Activated CD8-positive, alpha-beta T cell treated with anti-CD3 and anti-CD28 coated beads for 36 hours (primary cell): ENCODE measurements at regions of chr15 and their contacts with region 1.

Region 1: GRCh38 chr15:75367913-75368688 is at the start of gene MAN2C1:
- DNase-seq: peak; percentile 96
- ATAC-seq: peak; percentile 95
- H3K4me3 Mint-ChIP-seq: peak within 1 kb of the TSS; percentile 92
- H3K27ac Mint-ChIP-seq: peak within 1 kb of the TSS; percentile 94
- H3K4me1 Mint-ChIP-seq: peaks cover 23% of the 10 kb centered on the region
- H3K27me3 Mint-ChIP-seq: no peaks in the 10 kb centered on the region
- CTCF ChIP-seq: no peak
- total RNA-seq, gene MAN2C1: 170 to 181 TPM

Region 2: DNA sequence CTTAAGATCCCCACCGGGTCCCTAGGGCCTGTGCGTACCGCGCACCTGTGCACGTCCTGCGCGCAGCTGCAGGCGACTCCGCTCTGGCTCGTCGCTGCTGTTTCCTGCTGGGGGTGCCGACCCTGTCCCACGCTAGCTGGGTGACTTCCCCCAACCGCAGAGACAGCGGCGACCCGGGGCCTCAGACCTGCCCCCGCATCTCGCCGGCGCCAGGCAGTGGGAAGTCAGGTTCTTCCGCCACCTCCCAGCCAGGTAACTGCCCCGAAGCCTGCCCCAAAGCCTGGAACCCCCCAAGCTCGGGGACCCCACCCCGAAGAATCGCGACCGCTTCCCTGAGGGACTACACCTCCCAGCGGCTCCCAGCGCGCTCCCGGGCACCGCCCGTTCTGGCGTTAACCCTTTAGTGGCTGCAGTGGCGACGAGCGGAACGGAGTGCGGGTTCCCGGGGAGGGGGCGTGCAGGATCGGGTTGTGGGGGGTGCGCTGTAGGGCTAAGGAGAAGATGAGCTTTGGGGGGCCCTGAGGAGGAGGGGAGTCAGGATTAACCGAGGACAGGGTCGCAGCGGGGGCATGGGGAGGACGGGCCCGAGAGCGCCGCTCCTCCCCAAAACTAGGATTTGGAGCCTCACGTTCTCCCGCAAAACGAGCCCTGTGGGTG is 20.8 kb before region 1 on chr15:
- CTCF ChIA-PET with region 1: interaction called, 31 read pairs
- POLR2A ChIA-PET with region 1: interaction called, 81 read pairs
- intact Hi-C with region 1: no loop called
- DNase-seq: peak; percentile 76
- ATAC-seq: peak; percentile 61
- H3K4me3 Mint-ChIP-seq: peak overlapping the region; percentile 76
- H3K27ac Mint-ChIP-seq: peak overlapping the region; percentile 62
- H3K4me1 Mint-ChIP-seq: peaks cover 28% of the 10 kb centered on the region
- H3K27me3 Mint-ChIP-seq: peaks cover 1% of the 10 kb centered on the region
- CTCF ChIP-seq: no peak

Region 3: DNA sequence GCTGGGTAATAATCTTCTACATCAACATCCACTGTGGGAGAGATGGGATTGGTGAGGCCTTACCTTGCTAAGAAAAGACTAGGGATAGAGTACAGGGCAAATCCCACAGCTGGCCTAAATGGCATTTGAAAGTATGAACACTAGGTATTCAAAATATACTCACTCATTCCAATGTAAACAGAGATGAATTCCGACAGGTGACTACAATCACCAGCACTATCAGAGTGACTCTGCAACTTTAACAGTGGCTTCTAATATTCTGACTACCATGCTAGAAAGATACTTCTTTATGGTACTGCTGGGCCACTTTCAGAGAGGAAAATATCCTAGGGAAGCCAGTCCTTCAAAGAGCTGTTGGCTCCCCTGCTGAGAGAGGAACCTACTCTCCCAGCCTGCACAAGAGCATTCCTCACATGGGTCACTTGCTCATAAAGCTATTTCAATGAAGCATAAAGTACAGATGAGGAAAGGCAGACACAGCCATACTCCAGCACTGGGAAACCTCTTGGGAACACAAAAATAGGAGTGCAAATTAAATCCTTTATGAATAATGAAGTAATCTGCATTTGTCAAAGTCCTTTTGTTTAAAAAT is 21.8 kb after region 1 on chr15:
- CTCF ChIA-PET with region 1: interaction called, 11 read pairs
- POLR2A ChIA-PET with region 1: interaction called, 8 read pairs
- intact Hi-C with region 1: no loop called
- DNase-seq: no peak
- ATAC-seq: no peak
- H3K4me3 Mint-ChIP-seq: no peak overlapping the region
- H3K27ac Mint-ChIP-seq: no peak overlapping the region
- H3K4me1 Mint-ChIP-seq: peaks cover 16% of the 10 kb centered on the region
- H3K27me3 Mint-ChIP-seq: no peaks in the 10 kb centered on the region
- CTCF ChIP-seq: no peak

Region 4: GRCh38 chr15:75416584-75416983 is 48.5 kb after region 1 on chr15:
- CTCF ChIA-PET with region 1: interaction called, 11 read pairs
- POLR2A ChIA-PET with region 1: no interaction called
- intact Hi-C with region 1: no loop called
- DNase-seq: peak; percentile 15
- ATAC-seq: peak; percentile 55
- H3K4me3 Mint-ChIP-seq: no peak overlapping the region
- H3K27ac Mint-ChIP-seq: peak overlapping the region; percentile 79
- H3K4me1 Mint-ChIP-seq: peaks cover 20% of the 10 kb centered on the region
- H3K27me3 Mint-ChIP-seq: no peaks in the 10 kb centered on the region
- CTCF ChIP-seq: no peak

Region 5: DNA sequence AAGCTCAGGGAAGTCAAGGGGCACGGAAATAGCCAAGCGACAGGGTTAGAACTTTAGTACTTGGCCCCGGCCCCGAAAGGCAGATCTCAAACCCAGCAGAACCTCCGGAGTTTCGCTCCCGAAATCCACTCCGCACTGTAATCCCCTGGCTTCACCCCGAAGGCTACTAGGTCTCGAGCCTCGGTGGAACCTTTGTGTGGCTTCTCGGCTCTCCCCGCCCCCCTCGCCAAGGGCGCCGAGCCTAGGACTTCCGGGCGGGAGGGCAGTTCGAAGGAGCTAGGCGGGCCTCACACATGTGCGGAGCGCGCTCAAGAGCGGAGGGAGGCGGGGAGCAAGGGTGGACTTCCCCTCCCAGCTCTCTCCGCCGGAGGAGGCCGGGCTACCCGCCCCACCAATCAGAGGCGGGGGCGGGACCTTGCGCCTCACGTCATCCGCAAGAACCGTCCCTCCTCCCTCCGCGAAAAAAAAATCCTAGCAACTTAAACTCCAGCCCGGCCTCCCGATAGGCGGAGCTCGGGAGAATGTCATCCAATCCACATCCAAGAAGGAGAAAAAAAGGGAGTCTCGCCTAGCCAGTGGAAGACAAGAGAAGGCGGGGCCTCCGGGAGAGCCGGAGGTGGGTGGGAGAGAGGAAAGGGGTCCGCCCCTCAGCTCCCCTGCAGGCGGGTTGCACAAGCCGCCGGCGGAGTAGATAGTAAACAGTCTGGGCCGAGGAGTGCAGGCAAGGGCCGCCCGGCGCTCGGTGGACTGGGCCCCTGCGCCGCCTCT is 85.8 kb after region 1 on chr15:
- CTCF ChIA-PET with region 1: interaction called, 25 read pairs
- POLR2A ChIA-PET with region 1: interaction called, 30 read pairs
- intact Hi-C with region 1: loop called (anchors 5 kb)
- DNase-seq: peak; percentile 98
- ATAC-seq: peak; percentile 41
- H3K4me3 Mint-ChIP-seq: peak overlapping the region; percentile 96
- H3K27ac Mint-ChIP-seq: peak overlapping the region; percentile 100
- H3K4me1 Mint-ChIP-seq: peaks cover 18% of the 10 kb centered on the region
- H3K27me3 Mint-ChIP-seq: no peaks in the 10 kb centered on the region
- CTCF ChIP-seq: no peak

Region 6: GRCh38 chr15:75523011-75523410 is 154.9 kb after region 1 on chr15:
- CTCF ChIA-PET with region 1: no interaction called
- POLR2A ChIA-PET with region 1: no interaction called
- intact Hi-C with region 1: no loop called
- DNase-seq: no peak
- ATAC-seq: no peak
- H3K4me3 Mint-ChIP-seq: no peak overlapping the region
- H3K27ac Mint-ChIP-seq: no peak overlapping the region
- H3K4me1 Mint-ChIP-seq: no peaks in the 10 kb centered on the region
- H3K27me3 Mint-ChIP-seq: no peaks in the 10 kb centered on the region
- CTCF ChIP-seq: no peak

Region 7: GRCh38 chr15:75639709-75640482 is 271.8 kb after region 1 on chr15 and contains the start of gene IMP3:
- CTCF ChIA-PET with region 1: interaction called, 37 read pairs
- POLR2A ChIA-PET with region 1: interaction called, 16 read pairs
- intact Hi-C with region 1: loop called (anchors 10 kb)
- DNase-seq: peak; percentile 98
- ATAC-seq: peak; percentile 92
- H3K4me3 Mint-ChIP-seq: peak within 1 kb of the TSS; percentile 90
- H3K27ac Mint-ChIP-seq: peak within 1 kb of the TSS; percentile 90
- H3K4me1 Mint-ChIP-seq: peaks cover 23% of the 10 kb centered on the region
- H3K27me3 Mint-ChIP-seq: no peaks in the 10 kb centered on the region
- CTCF ChIP-seq: no peak
- total RNA-seq, gene IMP3: 101 to 105 TPM

Region 8: GRCh38 chr15:75684642-75685041 is 316.5 kb after region 1 on chr15:
- CTCF ChIA-PET with region 1: interaction called, 17 read pairs
- POLR2A ChIA-PET with region 1: no interaction called
- intact Hi-C with region 1: no loop called
- DNase-seq: no peak
- ATAC-seq: no peak
- H3K4me3 Mint-ChIP-seq: no peak overlapping the region
- H3K27ac Mint-ChIP-seq: no peak overlapping the region
- H3K4me1 Mint-ChIP-seq: peaks cover 3% of the 10 kb centered on the region
- H3K27me3 Mint-ChIP-seq: no peaks in the 10 kb centered on the region
- CTCF ChIP-seq: no peak